AG04450 (cell line): ENCODE measurements at regions of chr7 and their contacts with region 1.

Region 1: GRCh38 chr7:117715784-117716445 is 157.3 kb downstream of the CTTNBP2 start:
- DNase-seq: peak; percentile 32
- H3K4me3 ChIP-seq: no peak overlapping the region
- H3K27ac ChIP-seq: no peak overlapping the region
- H3K27me3 ChIP-seq: no peaks in the 10 kb centered on the region
- CTCF ChIP-seq: peak; percentile 78

Region 2: DNA sequence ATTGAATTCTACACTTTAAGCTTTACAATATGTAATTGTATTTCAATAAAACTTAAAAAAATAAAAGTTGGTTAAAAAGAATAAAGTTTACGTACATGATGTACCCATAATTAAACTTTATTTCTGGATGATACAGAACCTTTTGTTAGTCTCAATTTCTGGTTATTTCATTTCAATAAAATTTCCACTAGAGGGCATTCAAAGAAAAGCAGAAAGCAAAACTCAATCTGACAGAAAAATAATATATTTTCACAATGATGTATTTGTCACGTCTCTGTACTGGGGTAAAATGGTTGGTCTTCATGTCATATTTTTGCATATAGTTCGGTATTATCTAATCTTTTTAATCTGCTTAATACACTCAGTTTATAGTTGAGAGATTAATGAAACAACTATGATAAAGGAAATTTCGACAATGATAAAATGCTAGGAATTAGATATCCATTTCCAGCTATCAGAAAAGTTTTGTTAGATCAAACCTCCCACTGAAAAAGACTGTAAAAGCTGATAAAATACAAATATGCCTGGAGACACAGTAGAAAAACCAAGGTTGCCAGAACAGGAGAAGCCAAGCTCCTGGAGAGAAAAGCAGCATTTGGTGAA is 316.0 kb before region 1 on chr7:
- CTCF ChIA-PET with region 1: interaction called, 52 read pairs
- POLR2A ChIA-PET with region 1: no interaction called
- DNase-seq: no peak
- H3K4me3 ChIP-seq: no peak overlapping the region
- H3K27ac ChIP-seq: no peak overlapping the region
- H3K27me3 ChIP-seq: peaks cover 2% of the 10 kb centered on the region
- CTCF ChIP-seq: peak; percentile 54

Region 3: GRCh38 chr7:117673839-117674238 is 42.1 kb before region 1 on chr7:
- CTCF ChIA-PET with region 1: interaction called, 11 read pairs
- POLR2A ChIA-PET with region 1: no interaction called
- DNase-seq: no peak
- H3K4me3 ChIP-seq: no peak overlapping the region
- H3K27ac ChIP-seq: no peak overlapping the region
- H3K27me3 ChIP-seq: no peaks in the 10 kb centered on the region
- CTCF ChIP-seq: peak; percentile 49

Region 4: DNA sequence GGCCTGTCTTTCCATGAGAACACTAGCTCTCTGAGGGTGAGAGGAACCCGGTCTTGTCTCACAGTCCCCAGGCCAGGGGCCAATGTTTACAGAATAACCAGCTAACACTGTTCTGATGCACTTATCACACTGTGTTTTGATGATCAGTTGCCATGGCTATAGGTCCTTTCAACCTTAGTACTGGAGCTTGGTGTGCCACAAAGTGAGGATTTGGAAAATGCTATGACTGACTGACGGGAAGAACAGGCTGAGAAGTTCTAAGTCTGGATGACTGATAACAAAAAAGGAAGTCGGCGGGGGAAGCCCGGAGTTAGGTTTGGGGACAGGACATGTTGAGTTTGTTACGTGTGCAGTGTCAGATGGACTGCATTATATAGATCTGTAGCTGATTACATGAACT is 15.5 kb after region 1 on chr7:
- CTCF ChIA-PET with region 1: interaction called, 14 read pairs
- POLR2A ChIA-PET with region 1: no interaction called
- DNase-seq: no peak
- H3K4me3 ChIP-seq: no peak overlapping the region
- H3K27ac ChIP-seq: no peak overlapping the region
- H3K27me3 ChIP-seq: no peaks in the 10 kb centered on the region
- CTCF ChIP-seq: no peak

Region 5: DNA sequence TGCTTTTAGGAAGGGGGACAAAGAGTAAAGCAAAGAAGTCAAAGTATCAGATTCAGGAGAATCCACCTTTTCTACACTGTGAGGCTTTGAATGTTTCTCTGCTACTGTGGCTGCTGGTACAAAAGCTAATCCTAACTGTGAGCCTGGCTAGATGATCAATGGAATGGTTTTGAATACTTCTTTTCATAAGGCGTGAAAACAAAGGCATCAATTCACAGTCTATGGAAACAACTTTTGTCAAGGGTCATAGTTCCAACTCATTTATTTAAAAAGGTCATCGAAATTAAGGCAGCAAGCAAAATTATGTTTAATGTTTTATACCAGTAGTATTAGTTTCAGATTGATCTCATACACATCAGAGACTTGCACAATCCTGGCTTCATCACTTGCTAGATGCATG is 39.2 kb after region 1 on chr7:
- CTCF ChIA-PET with region 1: no interaction called
- POLR2A ChIA-PET with region 1: no interaction called
- DNase-seq: no peak
- H3K4me3 ChIP-seq: no peak overlapping the region
- H3K27ac ChIP-seq: no peak overlapping the region
- H3K27me3 ChIP-seq: no peaks in the 10 kb centered on the region
- CTCF ChIP-seq: no peak